ENCODE measurements at regions of chr11 and their contacts with region 1.

Region 1: DNA sequence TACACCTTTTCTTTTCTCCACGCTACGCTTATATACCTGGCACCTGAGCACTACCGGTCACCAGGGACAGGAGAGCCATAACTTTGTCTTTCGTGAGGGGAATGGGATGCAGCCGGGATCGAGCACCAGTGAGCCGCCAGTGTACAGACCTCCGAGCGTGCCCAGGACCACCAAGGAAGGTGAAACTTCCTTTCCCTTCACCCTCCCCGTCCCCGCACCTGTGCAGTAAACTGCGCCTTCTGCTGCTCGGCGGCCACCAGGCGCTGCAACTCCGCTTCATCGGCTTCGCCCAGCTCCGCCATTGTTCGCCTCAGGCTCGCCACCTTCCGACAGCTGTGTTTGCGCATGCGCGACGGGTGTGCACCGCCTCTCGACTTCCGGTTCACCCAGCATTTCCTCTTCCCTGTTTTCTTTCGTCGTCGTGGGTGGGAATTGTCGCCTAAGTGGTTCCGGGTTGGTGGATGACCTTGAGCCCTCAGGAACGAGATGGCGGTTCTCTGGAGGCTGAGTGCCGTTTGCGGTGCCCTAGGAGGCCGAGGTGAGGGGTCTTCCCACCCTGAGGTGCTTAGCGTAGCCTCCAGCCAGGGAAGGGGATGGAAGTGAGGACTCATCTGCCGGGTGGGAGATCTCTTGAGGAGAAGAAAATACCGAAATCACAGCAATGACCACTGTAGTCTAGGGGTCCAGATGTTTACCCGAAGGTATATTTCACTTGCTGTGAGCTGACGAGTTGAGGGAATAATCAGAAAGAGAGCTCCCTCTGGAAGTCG is at the starts of genes SDHD and TIMM8B:
- DNase-seq: peak; percentile 88
- ATAC-seq: peak; percentile 88
- H3K4me3 Mint-ChIP-seq: peak within 1 kb of the TSS; percentile 100
- H3K27ac Mint-ChIP-seq: peak within 1 kb of the TSS; percentile 97
- H3K4me1 Mint-ChIP-seq: peaks cover 45% of the 10 kb centered on the region
- H3K27me3 Mint-ChIP-seq: no peaks in the 10 kb centered on the region
- CTCF ChIP-seq: no peak
- total RNA-seq, gene SDHD: 79.9 and 82.1 TPM in 2 replicates
- total RNA-seq, gene TIMM8B: 37.0 and 39.6 TPM in 2 replicates

Region 2: GRCh38 chr11:112004389-112004788 is 82.2 kb before region 1 on chr11:
- CTCF ChIA-PET with region 1: interaction called, 3 read pairs
- POLR2A ChIA-PET with region 1: no interaction called
- intact Hi-C with region 1: loop called (anchors 1 kb)
- DNase-seq: peak; percentile 22
- ATAC-seq: peak; percentile 99
- H3K4me3 Mint-ChIP-seq: no peak overlapping the region
- H3K27ac Mint-ChIP-seq: no peak overlapping the region
- H3K4me1 Mint-ChIP-seq: peaks cover 7% of the 10 kb centered on the region
- H3K27me3 Mint-ChIP-seq: peaks cover 21% of the 10 kb centered on the region
- CTCF ChIP-seq: no peak

Region 3: DNA sequence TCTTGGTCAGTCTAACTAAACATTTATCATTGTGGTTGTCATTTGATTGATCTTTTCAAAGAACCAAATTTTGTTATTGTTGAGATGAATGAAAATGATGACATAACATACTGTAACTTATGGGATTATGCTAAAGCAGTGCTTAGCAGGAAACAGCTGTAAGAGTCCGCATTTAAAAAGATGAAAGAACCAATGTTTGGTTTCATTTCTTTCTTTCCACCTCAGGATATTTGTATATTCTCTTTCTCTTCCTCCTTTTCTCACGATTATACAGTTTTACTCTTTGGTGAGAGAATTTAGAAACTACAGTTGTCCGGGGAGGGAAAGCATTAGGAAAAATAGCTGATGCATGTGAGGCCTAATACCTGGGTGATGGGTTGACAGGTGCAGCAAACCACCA is 35.9 kb before region 1 on chr11:
- CTCF ChIA-PET with region 1: no interaction called
- POLR2A ChIA-PET with region 1: interaction called, 7 read pairs
- intact Hi-C with region 1: loop called (anchors 5 kb)
- DNase-seq: no peak
- ATAC-seq: peak; percentile 64
- H3K4me3 Mint-ChIP-seq: peak overlapping the region; percentile 69
- H3K27ac Mint-ChIP-seq: peak overlapping the region; percentile 91
- H3K4me1 Mint-ChIP-seq: peaks cover 56% of the 10 kb centered on the region
- H3K27me3 Mint-ChIP-seq: no peaks in the 10 kb centered on the region
- CTCF ChIP-seq: no peak

Region 4: GRCh38 chr11:112074026-112074811 is 12.4 kb before region 1 on chr11 and contains the start of gene NKAPD1:
- CTCF ChIA-PET with region 1: no interaction called
- POLR2A ChIA-PET with region 1: interaction called, 14 read pairs
- intact Hi-C with region 1: loop called (anchors 1 kb)
- DNase-seq: peak; percentile 69
- ATAC-seq: peak; percentile 82
- H3K4me3 Mint-ChIP-seq: peak within 1 kb of the TSS; percentile 96
- H3K27ac Mint-ChIP-seq: peak within 1 kb of the TSS; percentile 95
- H3K4me1 Mint-ChIP-seq: peaks cover 25% of the 10 kb centered on the region
- H3K27me3 Mint-ChIP-seq: no peaks in the 10 kb centered on the region
- CTCF ChIP-seq: no peak
- total RNA-seq, gene NKAPD1: 24.0 and 26.3 TPM in 2 replicates

Region 5: DNA sequence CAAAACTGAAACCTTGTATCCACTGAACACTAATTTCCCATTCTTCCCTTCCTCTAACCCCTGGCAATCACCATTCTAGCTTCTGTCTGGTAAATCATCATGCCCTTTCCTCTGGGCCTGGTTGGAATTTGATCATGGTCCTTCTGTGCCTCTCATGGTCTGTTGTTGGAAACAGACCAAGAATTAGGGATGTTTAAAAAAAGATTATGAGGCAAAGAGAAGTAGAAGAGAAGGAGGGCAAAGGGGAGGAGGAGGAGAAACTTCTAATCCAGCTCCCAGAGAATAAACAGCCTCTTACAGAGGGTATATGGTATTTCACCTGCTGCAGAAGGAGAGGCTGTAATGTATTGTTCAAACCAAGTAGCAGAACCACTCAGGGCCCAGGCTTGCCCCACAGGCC is 99.3 kb after region 1 on chr11:
- CTCF ChIA-PET with region 1: no interaction called
- POLR2A ChIA-PET with region 1: no interaction called
- intact Hi-C with region 1: no loop called
- DNase-seq: no peak
- ATAC-seq: no peak
- H3K4me3 Mint-ChIP-seq: no peak overlapping the region
- H3K27ac Mint-ChIP-seq: no peak overlapping the region
- H3K4me1 Mint-ChIP-seq: peaks cover 9% of the 10 kb centered on the region
- H3K27me3 Mint-ChIP-seq: no peaks in the 10 kb centered on the region
- CTCF ChIP-seq: no peak

Region 6: DNA sequence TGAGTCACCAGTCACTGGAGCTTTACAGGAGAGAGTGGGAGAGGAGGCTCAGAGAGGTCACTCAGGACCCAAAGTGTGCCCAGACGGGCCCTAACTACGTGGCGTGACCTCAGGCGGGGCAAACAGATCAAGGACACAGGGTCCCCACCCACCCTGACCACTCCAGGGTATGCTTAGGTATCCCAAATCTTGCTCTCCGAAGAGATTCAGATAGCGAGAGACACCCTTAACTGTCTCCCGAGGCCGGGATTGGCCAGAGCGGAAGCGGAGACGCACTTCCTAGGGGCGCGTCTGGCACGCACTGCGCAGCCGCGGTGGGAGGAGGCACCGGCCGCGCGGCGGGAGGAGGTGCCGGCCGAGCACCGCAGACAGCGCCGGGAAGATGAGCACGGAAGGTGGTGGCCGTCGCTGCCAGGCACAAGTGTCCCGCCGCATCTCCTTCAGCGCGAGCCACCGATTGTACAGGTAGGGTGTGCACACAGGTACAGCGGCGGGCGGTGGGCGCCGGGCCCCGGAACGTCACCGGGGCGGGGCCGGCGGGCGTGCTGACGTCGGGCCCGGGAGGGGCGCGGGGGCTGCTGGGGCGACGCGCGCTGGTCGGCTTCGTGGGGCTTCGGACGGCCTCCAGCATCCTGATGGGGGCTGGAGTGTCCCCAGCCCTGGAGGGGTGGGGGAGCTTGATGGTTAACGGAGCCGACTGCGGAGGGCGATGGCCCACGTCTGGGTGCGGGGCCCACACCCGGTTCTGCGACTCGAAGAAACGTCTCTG is 139.6 kb after region 1 on chr11 and contains the start of gene PTS:
- CTCF ChIA-PET with region 1: no interaction called
- POLR2A ChIA-PET with region 1: no interaction called
- intact Hi-C with region 1: loop called (anchors 1 kb)
- DNase-seq: peak; percentile 87
- ATAC-seq: peak; percentile 93
- H3K4me3 Mint-ChIP-seq: peak within 1 kb of the TSS; percentile 92
- H3K27ac Mint-ChIP-seq: peak within 1 kb of the TSS; percentile 96
- H3K4me1 Mint-ChIP-seq: peaks cover 13% of the 10 kb centered on the region
- H3K27me3 Mint-ChIP-seq: no peaks in the 10 kb centered on the region
- CTCF ChIP-seq: no peak
- total RNA-seq, gene PTS: 22.7 and 30.4 TPM in 2 replicates

Measured in activated B cell treated with CpG ODN at 0.5 μM for 24 hours (primary cell).